ENCODE measurements at regions of chr10 and their contacts with region 1.

Region 1: GRCh38 chr10:52215745-52216361 is 98.2 kb upstream of the DKK1 start:
- DNase-seq: peak; percentile 30 to 50 (median 33)
- H3K4me3 ChIP-seq: no peak overlapping the region
- H3K4me3 Mint-ChIP-seq: no peak overlapping the region
- H3K27ac ChIP-seq: no peak overlapping the region
- H3K27ac Mint-ChIP-seq: no peak overlapping the region
- H3K4me1 ChIP-seq: no peaks in the 10 kb centered on the region
- H3K4me1 Mint-ChIP-seq: no peaks in the 10 kb centered on the region
- H3K27me3 ChIP-seq: no peaks in the 10 kb centered on the region
- H3K27me3 Mint-ChIP-seq: no peaks in the 10 kb centered on the region

Region 2: DNA sequence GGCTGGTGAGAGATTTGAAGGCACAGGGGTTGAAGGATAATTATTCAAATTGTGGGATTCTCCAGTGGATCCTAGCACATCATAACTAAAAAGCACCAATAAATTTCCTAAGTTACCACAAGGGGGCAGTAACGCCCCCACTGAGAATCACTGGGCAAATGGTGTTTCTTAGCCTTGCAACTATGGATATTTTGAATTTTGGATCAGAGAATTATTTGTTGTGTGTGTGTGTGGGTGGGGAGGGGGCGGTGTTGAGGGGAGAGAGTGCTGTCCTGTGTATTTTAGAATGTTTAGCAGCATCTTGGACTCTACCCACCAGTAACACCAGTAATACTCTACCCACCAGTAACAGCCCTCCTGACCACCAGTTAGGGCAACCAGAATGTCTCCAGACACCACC is 1204.9 kb before region 1 on chr10:
- CTCF ChIA-PET with region 1: interaction called, 6 read pairs
- POLR2A ChIA-PET with region 1: no interaction called
- intact Hi-C with region 1: loop called (anchors 1 kb)
- DNase-seq: peak in 4 of 5 donors; percentile 12 to 26 (median 19)
- H3K4me3 ChIP-seq: no peak overlapping the region
- H3K4me3 Mint-ChIP-seq: no peak overlapping the region
- H3K27ac ChIP-seq: no peak overlapping the region
- H3K27ac Mint-ChIP-seq: no peak overlapping the region
- H3K4me1 ChIP-seq: no peaks in the 10 kb centered on the region
- H3K4me1 Mint-ChIP-seq: peaks cover 0 to 7% (median 2%) of the 10 kb centered on the region in 4 donors
- H3K27me3 ChIP-seq: no peaks in the 10 kb centered on the region
- H3K27me3 Mint-ChIP-seq: peaks cover 5 to 6% of the 10 kb centered on the region in 2 donors

Region 3: GRCh38 chr10:51063659-51064535 is 1152.0 kb before region 1 on chr10:
- CTCF ChIA-PET with region 1: no interaction called
- POLR2A ChIA-PET with region 1: no interaction called
- intact Hi-C with region 1: loop called (anchors 2 kb)
- DNase-seq: no peak
- H3K4me3 ChIP-seq: no peak overlapping the region
- H3K4me3 Mint-ChIP-seq: no peak overlapping the region
- H3K27ac ChIP-seq: no peak overlapping the region
- H3K27ac Mint-ChIP-seq: no peak overlapping the region
- H3K4me1 ChIP-seq: no peaks in the 10 kb centered on the region
- H3K4me1 Mint-ChIP-seq: no peaks in the 10 kb centered on the region
- H3K27me3 ChIP-seq: no peaks in the 10 kb centered on the region
- H3K27me3 Mint-ChIP-seq: peaks cover 0 to 3% of the 10 kb centered on the region in 2 donors

Region 4: DNA sequence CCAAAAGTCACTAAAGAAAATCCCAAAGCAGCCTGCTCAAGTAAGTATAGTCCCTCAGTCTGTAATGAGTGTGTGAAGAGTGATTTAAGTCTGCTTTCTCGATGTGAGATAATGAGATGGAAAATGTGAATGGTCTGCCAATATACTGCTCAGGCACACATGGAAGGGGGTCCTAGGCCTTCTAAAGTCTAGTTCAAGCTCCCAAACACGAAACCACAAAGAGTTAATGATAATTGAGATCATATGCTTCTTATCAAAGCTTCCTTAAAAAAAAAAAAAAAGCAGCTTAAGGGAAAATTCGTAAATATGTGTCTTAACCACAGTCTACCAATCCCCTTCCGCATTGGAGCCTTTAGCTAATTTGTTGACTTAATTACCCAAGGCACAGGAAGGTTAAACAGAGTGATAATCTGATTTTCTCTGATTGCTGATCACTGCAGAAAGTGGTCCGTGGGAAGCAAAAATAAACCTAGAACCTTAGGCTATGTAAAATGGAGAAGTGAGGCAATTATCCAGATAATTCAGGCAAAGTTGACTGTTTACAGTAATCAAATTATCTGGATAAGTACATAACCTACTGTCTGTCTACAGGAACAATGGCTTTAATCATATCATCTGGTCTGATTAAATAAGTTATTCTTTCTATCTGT is 383.8 kb after region 1 on chr10:
- CTCF ChIA-PET with region 1: no interaction called
- POLR2A ChIA-PET with region 1: no interaction called
- intact Hi-C with region 1: no loop called
- DNase-seq: no peak
- H3K4me3 ChIP-seq: no peak overlapping the region
- H3K4me3 Mint-ChIP-seq: no peak overlapping the region
- H3K27ac ChIP-seq: no peak overlapping the region
- H3K27ac Mint-ChIP-seq: no peak overlapping the region
- H3K4me1 ChIP-seq: no peaks in the 10 kb centered on the region
- H3K4me1 Mint-ChIP-seq: no peaks in the 10 kb centered on the region
- H3K27me3 ChIP-seq: no peaks in the 10 kb centered on the region
- H3K27me3 Mint-ChIP-seq: no peaks in the 10 kb centered on the region

Measured in CD4-positive, alpha-beta memory T cell (primary cell).